IMR-90 (cell line): ENCODE measurements at regions of chr3 and their contacts with region 1.

Region 1: GRCh38 chr3:44761424-44762169 is at the starts of genes KIAA1143 and KIF15:
- DNase-seq: peak; percentile 95
- ATAC-seq: peak; percentile 92
- H3K4me3 ChIP-seq: peak within 1 kb of the TSS; percentile 69
- H3K27ac ChIP-seq: peak within 1 kb of the TSS; percentile 47
- H3K4me1 ChIP-seq: no peaks in the 10 kb centered on the region
- H3K27me3 ChIP-seq: no peaks in the 10 kb centered on the region
- CTCF ChIP-seq: no peak
- POLR2A ChIP-seq: peak; percentile 73
- RAD21 ChIP-seq: peak; percentile 3; the same call in 1 of the 2 replicates
- total RNA-seq, gene KIAA1143: 16.8 and 23.9 TPM in 2 replicates
- total RNA-seq, gene KIF15: 8.4 and 10.8 TPM in 2 replicates

Region 2: GRCh38 chr3:44576613-44577012 is 185.0 kb before region 1 on chr3:
- CTCF ChIA-PET with region 1: interaction called, 12 read pairs
- POLR2A ChIA-PET with region 1: no interaction called
- dilution Hi-C with region 1: no loop called
- in situ Hi-C with region 1: no loop called
- intact Hi-C with region 1: no loop called
- DNase-seq: no peak
- ATAC-seq: no peak
- H3K4me3 ChIP-seq: no peak overlapping the region
- H3K27ac ChIP-seq: no peak overlapping the region
- H3K4me1 ChIP-seq: no peaks in the 10 kb centered on the region
- H3K27me3 ChIP-seq: no peaks in the 10 kb centered on the region
- CTCF ChIP-seq: no peak
- POLR2A ChIP-seq: no peak
- RAD21 ChIP-seq: no peak

Region 3: DNA sequence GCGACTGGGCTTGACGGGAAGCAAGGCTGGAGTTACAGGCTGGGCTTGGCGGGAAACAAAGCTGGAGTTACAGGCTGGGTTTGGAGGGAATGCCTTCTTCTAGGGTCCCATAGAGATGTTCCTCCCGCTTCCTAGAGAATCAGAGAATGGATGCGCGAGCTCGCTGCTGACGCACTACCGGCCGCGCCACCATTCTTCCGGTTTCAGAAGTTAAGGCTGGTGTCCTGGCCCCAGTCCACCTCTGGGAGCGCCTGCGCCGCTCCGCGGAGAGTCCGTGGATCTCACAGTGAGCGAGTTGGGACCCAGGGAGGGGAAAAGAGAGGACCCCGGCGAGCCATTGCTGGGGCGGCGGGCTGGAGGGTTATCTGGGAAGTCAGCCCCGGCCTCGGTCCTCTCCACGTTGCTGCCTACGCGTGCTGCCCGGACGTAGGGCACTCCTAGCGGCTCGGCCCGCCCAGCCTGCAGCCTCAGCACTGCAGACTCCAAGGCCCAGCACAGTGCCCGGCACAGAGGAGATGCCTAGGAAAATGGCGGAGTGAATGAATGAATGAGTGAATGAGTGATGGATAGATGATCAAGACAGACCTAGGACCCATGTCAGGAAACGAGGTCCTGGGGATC is 49.0 kb before region 1 on chr3 and contains the start of gene ZNF502:
- CTCF ChIA-PET with region 1: no interaction called
- POLR2A ChIA-PET with region 1: no interaction called
- dilution Hi-C with region 1: no loop called
- in situ Hi-C with region 1: no loop called
- intact Hi-C with region 1: no loop called
- DNase-seq: peak; percentile 84
- ATAC-seq: peak; percentile 99
- H3K4me3 ChIP-seq: peak within 1 kb of the TSS; percentile 75
- H3K27ac ChIP-seq: peak within 1 kb of the TSS; percentile 63
- H3K4me1 ChIP-seq: no peaks in the 10 kb centered on the region
- H3K27me3 ChIP-seq: no peaks in the 10 kb centered on the region
- CTCF ChIP-seq: 0 out of 2 replicates have a peak, but pooled peaks have one; percentile 7
- POLR2A ChIP-seq: 0 out of 2 replicates have a peak, but pooled peaks have one; percentile 20
- RAD21 ChIP-seq: peak; percentile 22; the same call in 1 of the 2 replicates
- total RNA-seq, gene ZNF502: 5.7 and 6.1 TPM in 2 replicates

Region 4: DNA sequence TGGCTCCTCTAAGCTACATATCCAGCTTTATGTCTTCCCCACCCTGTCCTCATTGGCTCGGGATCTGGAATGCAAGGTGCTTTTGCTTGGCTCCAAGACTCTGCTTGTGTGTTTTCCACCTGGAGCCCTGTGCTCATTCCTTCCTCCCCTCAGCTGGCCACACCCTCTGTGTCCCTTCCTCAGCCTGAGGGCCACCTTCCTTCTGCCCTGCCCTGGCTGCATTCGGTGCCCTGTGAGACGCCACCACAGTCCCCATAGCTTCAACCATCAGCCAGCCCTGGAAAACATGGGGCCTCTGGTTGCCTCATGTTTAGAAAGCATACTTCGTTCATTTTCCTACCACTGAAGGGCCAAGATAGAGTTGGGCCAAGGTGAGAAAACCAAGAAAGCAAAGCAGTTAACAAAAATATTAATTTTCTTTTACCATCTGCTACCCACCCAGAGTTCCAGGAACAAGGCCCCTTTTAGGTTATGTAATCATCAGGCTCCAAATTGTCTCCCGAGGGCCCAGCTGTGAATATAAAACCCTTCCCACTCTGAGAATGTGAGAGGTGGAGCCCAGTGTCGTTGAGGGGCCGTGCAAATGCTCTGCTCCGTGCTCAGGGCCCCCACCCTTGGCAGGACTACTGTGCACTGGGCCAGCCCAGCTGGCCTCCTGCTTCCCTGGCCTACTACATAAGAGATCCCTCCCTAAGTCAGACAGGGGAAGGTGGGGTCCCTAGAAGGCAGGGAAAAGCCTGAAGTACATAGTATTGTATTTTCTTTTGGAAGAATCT is 259.7 kb after region 1 on chr3:
- CTCF ChIA-PET with region 1: no interaction called
- POLR2A ChIA-PET with region 1: no interaction called
- dilution Hi-C with region 1: no loop called
- in situ Hi-C with region 1: no loop called
- intact Hi-C with region 1: no loop called
- DNase-seq: no peak
- ATAC-seq: no peak
- H3K4me3 ChIP-seq: no peak overlapping the region
- H3K27ac ChIP-seq: no peak overlapping the region
- H3K4me1 ChIP-seq: peaks cover 7% of the 10 kb centered on the region
- H3K27me3 ChIP-seq: no peaks in the 10 kb centered on the region
- CTCF ChIP-seq: no peak
- POLR2A ChIP-seq: no peak
- RAD21 ChIP-seq: no peak